ENCODE measurements at regions of chr10 and their contacts with region 1.

Region 1: DNA sequence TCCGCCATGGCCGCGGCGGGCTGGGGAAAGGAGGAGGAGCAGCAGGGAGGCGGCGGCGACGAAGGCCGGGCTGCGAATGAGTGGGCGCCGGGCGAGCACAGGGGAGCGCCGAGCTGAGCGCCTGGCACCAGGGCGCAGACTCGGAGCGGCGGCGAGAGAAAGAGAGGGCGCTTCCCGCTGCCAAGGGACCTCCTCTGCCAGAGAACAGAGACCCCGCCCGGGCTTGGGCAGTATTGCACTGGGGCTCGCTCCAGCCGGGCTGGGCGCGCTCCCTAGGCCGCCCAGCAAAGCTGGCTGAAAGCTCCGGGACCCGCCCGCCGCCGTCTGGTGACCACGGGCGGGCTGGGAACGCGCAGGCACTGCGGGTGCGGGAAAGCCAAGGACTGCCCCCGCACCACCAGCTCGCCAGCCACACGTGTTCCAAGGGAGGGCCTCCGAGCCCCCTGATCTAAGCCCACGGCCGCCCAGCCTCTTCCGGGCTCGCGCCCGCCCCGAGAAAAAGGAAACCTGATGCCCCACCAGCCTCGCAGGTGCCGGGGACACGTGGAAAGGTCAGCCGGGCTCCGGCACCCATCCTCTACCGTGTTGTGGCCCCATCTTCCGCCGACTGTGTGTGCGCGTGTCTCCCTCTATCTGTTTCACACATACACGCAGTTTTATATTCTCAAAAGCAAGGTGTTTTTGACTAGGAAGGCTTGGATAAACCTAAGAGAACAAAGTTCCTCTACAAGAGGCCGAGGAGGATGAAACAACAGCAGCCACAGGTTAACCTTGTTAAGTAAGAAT is at the start of gene CCDC6:
- DNase-seq: peak; percentile 97
- H3K4me3 ChIP-seq: peak within 1 kb of the TSS; percentile 86 to 99 (median 90)
- H3K27ac ChIP-seq: peak within 1 kb of the TSS; percentile 92 to 97 (median 94)
- H3K4me1 ChIP-seq: peaks cover 28 to 62% (median 57%) of the 10 kb centered on the region in 4 donors
- H3K27me3 ChIP-seq: no peaks in the 10 kb centered on the region
- CTCF ChIP-seq: peak; percentile 75 to 82 (median 79)
- EP300 ChIP-seq: no peak
- POLR2A ChIP-seq: peak; percentile 78
- total RNA-seq, gene CCDC6: 41.4 to 71.0 (median 57.2) TPM

Region 2: DNA sequence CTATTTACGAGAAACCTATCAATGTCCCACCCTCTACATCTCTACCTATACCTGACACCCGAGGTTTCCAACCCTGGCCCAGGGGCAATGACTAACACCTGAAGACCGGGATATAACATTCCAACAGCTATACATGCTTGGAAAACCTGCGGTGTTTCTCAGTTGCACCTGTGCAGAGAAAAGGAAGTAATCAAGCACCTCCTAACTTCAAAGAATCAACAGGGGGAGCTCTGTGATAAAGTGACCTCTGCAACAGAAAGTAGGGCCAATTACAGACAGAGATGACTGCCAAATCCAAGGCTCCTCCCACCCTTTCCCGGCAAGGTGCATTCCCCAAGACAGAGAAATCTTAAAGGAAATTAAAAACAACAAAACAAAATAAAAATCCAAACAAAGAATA is 41.5 kb before region 1 on chr10:
- intact Hi-C with region 1: loop called (anchors 2 kb)
- DNase-seq: no peak
- H3K4me3 ChIP-seq: no peak overlapping the region
- H3K27ac ChIP-seq: peak overlapping the region; percentile 3 to 69 (median 44)
- H3K4me1 ChIP-seq: peaks cover 13 to 59% (median 48%) of the 10 kb centered on the region in 4 donors
- H3K27me3 ChIP-seq: no peaks in the 10 kb centered on the region
- CTCF ChIP-seq: peak; percentile 41 to 55 (median 44)
- EP300 ChIP-seq: no peak
- POLR2A ChIP-seq: no peak

Region 3: GRCh38 chr10:60035984-60036383 is 129.4 kb after region 1 on chr10:
- intact Hi-C with region 1: loop called (anchors 5 kb)
- DNase-seq: no peak
- H3K4me3 ChIP-seq: no peak overlapping the region
- H3K27ac ChIP-seq: no peak overlapping the region
- H3K4me1 ChIP-seq: peaks cover 12 to 38% (median 37%) of the 10 kb centered on the region in 4 donors
- H3K27me3 ChIP-seq: no peaks in the 10 kb centered on the region
- CTCF ChIP-seq: no peak
- EP300 ChIP-seq: no peak
- POLR2A ChIP-seq: no peak

Measured in esophagus muscularis mucosa (tissue), 4 donors.